K562 (cell line): ENCODE measurements at regions of chr4 and their contacts with region 1.

Region 1: GRCh38 chr4:154618708-154619315 is 6.4 kb upstream of the FGG start:
- DNase-seq: peak in 2 of 4 experiments; percentile 59 to 76
- ATAC-seq: peak; percentile 89
- H3K4me3 ChIP-seq: no peak overlapping the region
- H3K27ac ChIP-seq: no peak overlapping the region
- H3K4me1 ChIP-seq: no peaks in the 10 kb centered on the region
- H3K27me3 ChIP-seq: 0 out of 5 replicates have a peak, but pooled peaks cover 0 to 4% of the 10 kb centered on the region in 2 experiments
- CTCF ChIP-seq: peak; percentile 68 to 83 (median 69)
- EP300 ChIP-seq: no peak
- POLR2A ChIP-seq: no peak
- RAD21 ChIP-seq: peak; percentile 72 to 87

Region 2: GRCh38 chr4:153318696-153319320 is 1300.0 kb before region 1 on chr4:
- CTCF ChIA-PET with region 1: no interaction called
- POLR2A ChIA-PET with region 1: no interaction called
- in situ Hi-C with region 1: no loop called
- intact Hi-C with region 1: no loop called
- DNase-seq: peak; percentile 18 to 51 (median 34)
- ATAC-seq: peak; percentile 90
- H3K4me3 ChIP-seq: no peak overlapping the region
- H3K27ac ChIP-seq: no peak overlapping the region
- H3K4me1 ChIP-seq: no peaks in the 10 kb centered on the region
- H3K27me3 ChIP-seq: peaks cover 4 to 11% of the 10 kb centered on the region in 2 experiments; a peak in 4 of 5 replicates
- CTCF ChIP-seq: peak; percentile 46 to 74 (median 55); a peak in 3 of 6 replicates
- EP300 ChIP-seq: no peak
- POLR2A ChIP-seq: no peak
- RAD21 ChIP-seq: peak; percentile 48 to 71

Region 3: DNA sequence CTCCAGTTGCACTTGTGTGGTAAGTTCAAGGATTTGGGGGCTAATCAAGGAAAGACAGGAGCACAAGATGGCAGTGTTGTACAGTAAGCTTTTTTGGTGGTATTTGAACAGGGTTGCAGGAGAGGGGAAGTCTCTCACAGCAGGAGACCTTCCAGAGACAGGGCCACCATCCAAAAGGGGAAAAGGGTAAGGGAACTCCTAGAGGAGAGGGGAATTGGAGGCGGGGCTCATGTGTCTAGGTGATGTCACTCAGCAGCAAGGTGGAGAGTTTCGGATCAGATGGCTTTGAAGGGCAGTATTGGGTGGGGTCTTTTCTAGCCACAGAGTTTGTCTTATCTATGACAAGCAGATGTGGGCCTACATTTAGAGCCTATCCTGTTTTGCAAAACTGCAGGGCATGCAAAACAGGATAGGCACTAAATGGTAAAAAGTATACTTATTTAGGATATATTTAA is 845.5 kb before region 1 on chr4:
- CTCF ChIA-PET with region 1: no interaction called
- POLR2A ChIA-PET with region 1: no interaction called
- in situ Hi-C with region 1: no loop called
- intact Hi-C with region 1: loop called (anchors 10 kb)
- DNase-seq: peak; percentile 71 to 90 (median 82)
- ATAC-seq: peak; percentile 99
- H3K4me3 ChIP-seq: no peak overlapping the region
- H3K27ac ChIP-seq: peak overlapping the region; percentile 72
- H3K4me1 ChIP-seq: peaks cover 0 to 15% of the 10 kb centered on the region in 2 experiments; a peak in 2 of 5 replicates
- H3K27me3 ChIP-seq: no peaks in the 10 kb centered on the region
- CTCF ChIP-seq: peak; percentile 28 to 54 (median 51); a peak in 4 of 6 replicates
- EP300 ChIP-seq: peak; percentile 88
- POLR2A ChIP-seq: no peak
- RAD21 ChIP-seq: peak; percentile 25 to 67

Region 4: GRCh38 chr4:154329268-154329868 is 289.4 kb before region 1 on chr4:
- CTCF ChIA-PET with region 1: interaction called, 3 read pairs
- POLR2A ChIA-PET with region 1: no interaction called
- in situ Hi-C with region 1: no loop called
- intact Hi-C with region 1: loop called (anchors 2 kb)
- DNase-seq: peak in 2 of 4 experiments; percentile 11 to 53
- ATAC-seq: peak; percentile 83
- H3K4me3 ChIP-seq: no peak overlapping the region
- H3K27ac ChIP-seq: no peak overlapping the region
- H3K4me1 ChIP-seq: peaks cover 0 to 6% of the 10 kb centered on the region in 2 experiments; a peak in 1 of 5 replicates
- H3K27me3 ChIP-seq: no peaks in the 10 kb centered on the region; a peak in 1 of 5 replicates
- CTCF ChIP-seq: peak; percentile 35 to 60 (median 49); a peak in 4 of 6 replicates
- EP300 ChIP-seq: no peak
- POLR2A ChIP-seq: no peak
- RAD21 ChIP-seq: peak in 1 of 2 experiments; percentile 63; a peak in 3 of 4 replicates

Region 5: GRCh38 chr4:154399259-154399974 is 219.4 kb before region 1 on chr4:
- CTCF ChIA-PET with region 1: interaction called, 8 read pairs
- POLR2A ChIA-PET with region 1: no interaction called
- in situ Hi-C with region 1: no loop called
- intact Hi-C with region 1: loop called (anchors 1 kb)
- DNase-seq: peak in 2 of 4 experiments; percentile 31 to 63
- ATAC-seq: peak; percentile 85
- H3K4me3 ChIP-seq: no peak overlapping the region
- H3K27ac ChIP-seq: no peak overlapping the region
- H3K4me1 ChIP-seq: no peaks in the 10 kb centered on the region; a peak in 1 of 5 replicates
- H3K27me3 ChIP-seq: no peaks in the 10 kb centered on the region
- CTCF ChIP-seq: peak; percentile 38 to 74 (median 53); a peak in 4 of 6 replicates
- EP300 ChIP-seq: no peak
- POLR2A ChIP-seq: no peak
- RAD21 ChIP-seq: peak; percentile 72 to 79

Region 6: GRCh38 chr4:154551872-154552686 is 66.7 kb before region 1 on chr4:
- CTCF ChIA-PET with region 1: interaction called, 14 read pairs
- POLR2A ChIA-PET with region 1: interaction called, 5 read pairs
- in situ Hi-C with region 1: loop called (anchors 5 kb)
- intact Hi-C with region 1: loop called (anchors 1 kb)
- DNase-seq: peak; percentile 62 to 85 (median 70)
- ATAC-seq: peak; percentile 76
- H3K4me3 ChIP-seq: no peak overlapping the region
- H3K27ac ChIP-seq: 0 out of 3 replicates have a peak overlapping the region, but pooled peaks have one; percentile 18
- H3K4me1 ChIP-seq: peaks cover 0 to 7% of the 10 kb centered on the region in 2 experiments; a peak in 1 of 5 replicates
- H3K27me3 ChIP-seq: no peaks in the 10 kb centered on the region
- CTCF ChIP-seq: peak; percentile 80 to 87 (median 81)
- EP300 ChIP-seq: no peak
- POLR2A ChIP-seq: no peak
- RAD21 ChIP-seq: peak; percentile 77 to 83

Region 7: DNA sequence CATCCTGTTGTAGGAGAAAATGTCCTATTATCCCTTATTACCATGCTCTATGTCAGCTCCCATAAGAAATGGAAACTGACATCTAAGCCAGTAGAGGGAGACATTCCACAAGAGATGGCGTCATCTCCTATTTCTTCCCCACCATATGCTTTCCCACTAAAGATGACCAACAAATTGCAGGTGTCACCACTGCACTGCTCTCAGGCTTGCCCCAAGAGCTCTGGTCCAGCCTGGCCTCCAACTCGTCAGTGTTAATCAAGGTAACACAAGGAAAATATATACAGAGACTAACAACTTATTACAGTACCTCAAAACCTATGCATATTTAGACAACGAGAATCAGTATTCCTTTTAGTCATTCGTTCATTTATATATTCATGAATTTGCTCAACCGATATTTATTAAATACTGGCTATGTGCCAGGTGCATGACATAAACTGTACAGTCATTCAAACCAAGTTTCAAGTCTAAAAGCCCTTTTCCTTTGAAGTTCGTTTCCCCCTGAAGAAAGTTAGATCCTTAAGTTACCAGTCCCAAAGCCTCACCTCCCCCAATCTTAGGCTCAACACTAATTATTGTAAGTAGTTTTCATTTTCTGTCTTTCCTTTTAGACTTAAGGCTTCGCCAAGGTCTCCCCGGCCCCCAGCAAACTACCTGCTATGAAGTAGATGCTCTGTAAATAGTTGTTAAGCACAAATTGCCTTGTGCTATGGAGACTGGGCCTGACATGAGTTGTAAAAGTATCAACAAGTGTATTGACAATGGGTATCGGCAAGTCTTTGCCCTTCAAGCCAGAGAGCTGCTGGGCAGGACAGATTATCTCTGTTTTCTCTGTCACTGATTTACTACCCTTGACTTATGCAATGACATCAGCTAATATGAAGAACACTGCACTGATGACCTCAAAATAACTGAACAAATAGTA is 59.1 kb before region 1 on chr4:
- CTCF ChIA-PET with region 1: interaction called, 10 read pairs
- POLR2A ChIA-PET with region 1: interaction called, 3 read pairs
- in situ Hi-C with region 1: loop called (anchors 5 kb)
- intact Hi-C with region 1: loop called (anchors 1 kb)
- DNase-seq: peak; percentile 48 to 73 (median 50)
- ATAC-seq: peak; percentile 99
- H3K4me3 ChIP-seq: no peak overlapping the region
- H3K27ac ChIP-seq: no peak overlapping the region
- H3K4me1 ChIP-seq: peaks cover 0 to 4% of the 10 kb centered on the region in 2 experiments; a peak in 1 of 5 replicates
- H3K27me3 ChIP-seq: no peaks in the 10 kb centered on the region; a peak in 1 of 5 replicates
- CTCF ChIP-seq: peak; percentile 69 to 88 (median 73)
- EP300 ChIP-seq: no peak
- POLR2A ChIP-seq: no peak
- RAD21 ChIP-seq: peak; percentile 81 to 95

Region 8: DNA sequence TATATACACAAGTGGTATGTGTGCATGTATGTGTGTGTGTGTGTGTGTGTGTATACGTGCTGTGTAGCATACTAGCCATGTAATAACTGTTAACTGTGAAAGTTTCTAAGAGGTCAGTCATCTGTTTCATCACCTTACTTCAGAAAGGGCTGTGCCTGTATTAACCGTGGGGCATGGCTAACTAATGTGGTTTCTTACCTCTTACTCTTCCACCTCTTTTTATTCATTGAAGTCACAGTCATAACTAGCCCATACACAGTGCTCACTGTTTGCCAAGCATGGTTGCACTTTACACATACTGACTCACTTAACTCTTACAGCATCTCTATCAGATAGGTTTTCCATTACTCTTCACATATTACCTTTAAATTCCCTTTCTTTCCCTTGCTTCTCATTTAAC is 101.3 kb after region 1 on chr4:
- CTCF ChIA-PET with region 1: no interaction called
- POLR2A ChIA-PET with region 1: no interaction called
- in situ Hi-C with region 1: no loop called
- intact Hi-C with region 1: no loop called
- DNase-seq: no peak
- ATAC-seq: no peak; the same call in 2 of the 3 replicates
- H3K4me3 ChIP-seq: no peak overlapping the region
- H3K27ac ChIP-seq: no peak overlapping the region
- H3K4me1 ChIP-seq: no peaks in the 10 kb centered on the region; a peak in 1 of 5 replicates
- H3K27me3 ChIP-seq: no peaks in the 10 kb centered on the region; a peak in 1 of 5 replicates
- CTCF ChIP-seq: no peak
- EP300 ChIP-seq: no peak
- POLR2A ChIP-seq: no peak
- RAD21 ChIP-seq: no peak